ENCODE measurements at regions of chr15 and their contacts with region 1.

Region 1: DNA sequence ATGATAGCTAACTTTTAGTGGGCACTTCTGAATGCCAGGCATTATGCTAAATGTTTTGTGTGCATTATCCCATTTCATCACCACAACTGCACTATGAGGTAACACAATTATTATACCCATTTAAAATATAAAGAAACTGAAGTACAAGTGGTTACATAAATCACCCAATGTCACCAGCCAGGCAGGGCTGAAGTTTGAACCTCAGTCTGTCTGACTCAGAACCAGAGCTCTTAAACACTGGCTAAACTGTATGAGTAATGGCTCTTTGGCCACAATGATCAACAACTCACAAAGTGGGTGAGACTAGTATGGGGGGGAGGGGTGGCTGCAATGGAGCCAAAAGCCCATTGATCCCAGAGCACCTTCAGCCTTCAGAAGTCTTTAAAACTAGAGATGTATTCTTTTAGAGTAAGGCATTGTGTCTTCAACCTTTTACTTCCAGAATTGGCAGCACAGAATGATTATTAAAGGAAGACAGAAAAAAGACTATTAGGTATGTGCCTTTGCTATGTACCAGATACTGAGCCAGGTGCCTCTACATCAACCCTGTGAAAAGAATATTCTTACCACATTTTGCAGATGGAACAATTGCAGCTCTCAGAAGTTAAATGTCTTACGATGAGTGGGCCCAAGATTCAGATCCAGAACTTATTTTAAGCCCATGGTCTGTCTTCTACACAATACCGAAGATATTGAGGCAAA is 166.9 kb downstream of the UACA start:
- DNase-seq: peak; percentile 44
- H3K4me3 ChIP-seq: no peak overlapping the region
- H3K27me3 ChIP-seq: no peaks in the 10 kb centered on the region
- CTCF ChIP-seq: no peak

Region 2: GRCh38 chr15:70562906-70563305 is 33.6 kb before region 1 on chr15:
- CTCF ChIA-PET with region 1: no interaction called
- POLR2A ChIA-PET with region 1: interaction called, 13 read pairs
- DNase-seq: no peak
- H3K4me3 ChIP-seq: no peak overlapping the region
- H3K27me3 ChIP-seq: peaks cover 20% of the 10 kb centered on the region
- CTCF ChIP-seq: no peak

Region 3: DNA sequence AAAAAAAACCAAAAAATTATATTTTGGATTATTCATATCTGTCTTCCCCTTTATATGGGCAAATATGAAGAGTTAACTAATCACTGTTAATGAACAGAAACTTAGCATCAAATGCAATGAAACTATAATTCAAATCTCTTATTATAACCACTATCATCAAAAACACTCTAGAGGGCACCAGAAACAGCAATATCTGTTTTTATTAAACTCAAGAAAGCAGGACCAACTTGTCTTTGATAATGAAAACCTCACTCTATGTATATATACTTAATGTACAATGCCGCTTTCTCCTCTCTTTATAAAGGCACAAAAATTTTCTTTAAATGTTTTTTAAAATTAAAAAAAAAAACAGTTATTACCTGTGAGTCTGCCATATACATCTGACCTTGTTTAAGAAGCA is 74.2 kb after region 1 on chr15:
- CTCF ChIA-PET with region 1: no interaction called
- POLR2A ChIA-PET with region 1: no interaction called
- DNase-seq: no peak
- H3K4me3 ChIP-seq: no peak overlapping the region
- H3K27me3 ChIP-seq: no peaks in the 10 kb centered on the region
- CTCF ChIP-seq: peak; percentile 15; the same call in 1 of the 2 replicates